ENCODE measurements at regions of chr15 and their contacts with region 1.

Region 1: GRCh38 chr15:75029378-75030022 is 6.1 kb downstream of the PPCDC start:
- DNase-seq: peak; percentile 61 to 98
- H3K4me3 ChIP-seq: no peak overlapping the region
- H3K27ac ChIP-seq: no peak overlapping the region
- H3K4me1 ChIP-seq: peaks cover 0 to 11% (median 9%) of the 10 kb centered on the region in 4 experiments; a peak in 5 of 7 replicates
- H3K27me3 ChIP-seq: no peaks in the 10 kb centered on the region
- CTCF ChIP-seq: peak; percentile 92 to 97 (median 95)
- EP300 ChIP-seq: no peak
- POLR2A ChIP-seq: no peak
- RAD21 ChIP-seq: peak; percentile 98 to 99

Region 2: DNA sequence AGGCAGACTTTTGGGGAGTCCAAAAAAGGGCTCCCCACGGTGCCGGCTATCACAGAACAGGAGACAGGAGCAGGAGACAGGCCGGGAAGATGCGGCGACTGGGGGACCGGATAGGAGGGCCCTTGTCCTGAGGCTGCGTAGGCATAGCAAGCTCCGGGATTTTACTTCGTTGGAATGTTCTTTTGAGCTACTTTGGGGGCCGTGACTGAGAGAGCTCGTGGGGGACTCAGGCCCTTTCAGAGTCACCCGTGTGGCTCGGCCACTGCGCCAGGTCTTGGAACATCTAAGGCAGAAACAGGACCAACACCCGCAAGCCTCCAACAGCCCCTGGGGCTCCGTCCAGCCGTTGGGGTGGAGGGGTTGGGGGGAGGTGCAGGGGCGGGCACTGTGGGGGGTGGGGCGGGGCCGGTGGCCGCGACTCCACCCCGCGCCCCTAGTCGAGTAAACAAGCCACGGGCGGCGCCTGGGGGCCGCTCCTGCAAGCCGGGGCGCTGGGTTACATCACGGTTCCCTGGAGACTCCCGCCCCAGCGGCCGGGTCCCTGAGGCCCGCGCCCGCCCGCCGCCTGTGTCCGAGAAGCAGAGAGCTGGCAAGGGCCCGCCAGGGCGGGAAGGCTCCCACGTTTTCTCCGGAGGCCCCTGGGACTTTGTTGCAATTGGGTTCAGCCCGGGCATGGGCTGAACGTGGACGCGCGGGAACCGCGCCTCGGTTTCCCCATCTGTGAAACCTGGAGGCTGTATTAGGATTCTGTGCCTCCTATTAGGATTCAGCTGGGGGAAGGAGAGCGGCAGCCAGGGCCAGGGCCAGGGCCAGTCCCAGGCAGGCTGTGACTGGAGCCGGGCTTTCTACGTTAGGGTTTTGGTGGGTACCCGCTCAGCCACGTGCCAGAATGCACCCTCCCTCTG is 148.9 kb after region 1 on chr15:
- CTCF ChIA-PET with region 1: interaction called, 12 read pairs
- POLR2A ChIA-PET with region 1: interaction called, 3 read pairs
- DNase-seq: peak in 1 of 2 experiments; percentile 72
- H3K4me3 ChIP-seq: peak overlapping the region; percentile 12 to 57 (median 24); a peak in 6 of 8 replicates
- H3K27ac ChIP-seq: no peak overlapping the region
- H3K4me1 ChIP-seq: peaks cover 4 to 25% (median 19%) of the 10 kb centered on the region in 4 experiments
- H3K27me3 ChIP-seq: peaks cover 0 to 16% (median 7%) of the 10 kb centered on the region in 4 experiments; a peak in 4 of 7 replicates
- CTCF ChIP-seq: no peak; a peak in 1 of 4 replicates
- EP300 ChIP-seq: no peak
- POLR2A ChIP-seq: no peak
- RAD21 ChIP-seq: 0 out of 4 replicates have a peak, but pooled peaks of 1 of the 2 experiments have one; percentile 1

Region 3: DNA sequence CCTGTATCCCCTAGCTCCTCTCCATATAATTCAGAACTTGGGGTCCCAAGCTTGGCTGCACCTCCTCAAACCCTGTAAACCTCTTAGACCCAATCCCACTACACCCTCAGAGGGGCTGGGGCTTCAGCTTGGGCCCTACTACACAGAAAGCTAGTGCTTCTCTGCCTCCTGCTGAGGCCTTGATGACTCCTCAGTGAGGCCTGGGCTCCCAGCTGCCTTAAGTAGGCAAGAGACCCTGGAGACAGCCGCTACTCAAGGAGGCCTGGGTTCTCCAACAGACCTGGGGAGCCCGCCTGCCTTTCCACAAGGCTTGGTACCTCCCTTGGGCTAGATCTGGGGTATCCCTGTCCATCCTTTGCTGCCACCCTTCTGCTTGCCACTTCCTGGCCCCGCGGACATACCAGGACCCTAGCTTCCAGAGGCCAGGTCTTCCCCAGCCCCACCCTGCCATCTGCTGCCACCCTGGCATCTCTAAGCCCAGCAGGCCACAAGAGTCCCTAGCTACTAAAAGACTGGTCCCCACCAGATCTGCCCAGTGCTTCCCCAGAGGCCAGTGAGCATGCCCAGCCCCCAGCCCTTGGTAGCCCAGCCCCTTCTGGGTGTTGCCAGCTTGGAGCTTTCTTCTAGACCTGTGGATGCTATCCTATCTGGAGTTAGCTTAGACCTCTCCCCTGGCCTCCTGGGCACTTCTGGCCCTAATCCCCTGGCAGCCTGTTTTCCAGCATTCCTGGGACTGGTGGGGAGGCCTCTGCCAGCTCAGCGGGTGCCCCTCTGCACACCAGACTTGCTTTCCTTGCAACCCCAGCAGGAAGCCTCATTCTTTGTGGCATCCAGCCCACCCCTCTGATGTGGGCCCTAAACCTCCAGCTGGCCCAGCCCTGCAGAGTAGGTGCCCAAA is 185.9 kb after region 1 on chr15:
- CTCF ChIA-PET with region 1: interaction called, 24 read pairs
- POLR2A ChIA-PET with region 1: interaction called, 4 read pairs
- DNase-seq: peak in 1 of 2 experiments; percentile 58
- H3K4me3 ChIP-seq: no peak overlapping the region
- H3K27ac ChIP-seq: no peak overlapping the region
- H3K4me1 ChIP-seq: peaks cover 0 to 17% (median 3%) of the 10 kb centered on the region in 4 experiments; a peak in 4 of 7 replicates
- H3K27me3 ChIP-seq: peaks cover 0 to 3% (median 0%) of the 10 kb centered on the region in 4 experiments; a peak in 1 of 7 replicates
- CTCF ChIP-seq: no peak
- EP300 ChIP-seq: no peak
- POLR2A ChIP-seq: no peak
- RAD21 ChIP-seq: no peak

Region 4: DNA sequence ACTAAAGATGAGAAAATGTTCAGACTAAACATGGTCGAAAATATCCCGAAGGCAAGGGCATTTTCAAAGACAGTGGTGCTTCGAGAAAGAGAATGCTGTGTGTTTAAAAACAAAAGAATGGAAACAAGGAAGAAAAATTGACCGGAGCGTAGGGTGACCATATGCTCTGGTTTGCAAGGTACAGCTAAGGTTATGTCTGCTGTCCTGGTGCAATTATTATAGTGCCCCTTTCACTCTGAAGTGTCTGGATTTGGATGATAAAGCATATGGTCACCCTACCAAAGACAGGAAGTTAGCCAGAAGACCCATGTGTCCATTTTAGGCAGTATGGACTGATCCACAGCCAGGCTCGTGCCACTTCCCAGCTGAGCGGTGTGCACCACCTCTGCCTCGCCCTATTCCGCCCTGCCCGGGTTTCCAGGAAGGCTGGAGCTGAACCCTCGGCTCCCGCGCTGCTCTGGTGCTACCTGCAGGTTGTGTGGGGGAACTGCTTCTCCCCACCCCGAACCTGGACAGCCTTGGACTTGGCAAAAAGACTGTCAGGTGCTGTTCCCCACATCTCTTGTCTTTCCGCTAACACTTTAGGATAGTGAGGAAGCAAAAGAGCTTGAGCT is 278.4 kb after region 1 on chr15:
- CTCF ChIA-PET with region 1: interaction called, 35 read pairs
- POLR2A ChIA-PET with region 1: interaction called, 3 read pairs
- DNase-seq: peak; percentile 60 to 88
- H3K4me3 ChIP-seq: no peak overlapping the region
- H3K27ac ChIP-seq: no peak overlapping the region
- H3K4me1 ChIP-seq: no peaks in the 10 kb centered on the region
- H3K27me3 ChIP-seq: no peaks in the 10 kb centered on the region
- CTCF ChIP-seq: peak; percentile 94 to 95 (median 95)
- EP300 ChIP-seq: no peak
- POLR2A ChIP-seq: no peak
- RAD21 ChIP-seq: peak; percentile 98 to 99